CD4-positive, alpha-beta memory T cell (primary cell): ENCODE measurements at regions of chr12 and their contacts with region 1.

Region 1: GRCh38 chr12:52327052-52327829 is 6.0 kb upstream of the KRT83 start:
- DNase-seq: peak; percentile 76 to 84 (median 80)
- H3K4me3 ChIP-seq: no peak overlapping the region
- H3K4me3 Mint-ChIP-seq: peak overlapping the region in 1 of 8 donors; percentile 2
- H3K27ac ChIP-seq: no peak overlapping the region
- H3K27ac Mint-ChIP-seq: peak overlapping the region in 2 of 7 donors; percentile 36 to 75
- H3K4me1 ChIP-seq: peaks cover 3% of the 10 kb centered on the region
- H3K4me1 Mint-ChIP-seq: peaks cover 5 to 7% (median 6%) of the 10 kb centered on the region in 4 donors
- H3K27me3 ChIP-seq: no peaks in the 10 kb centered on the region
- H3K27me3 Mint-ChIP-seq: peaks cover 7 to 12% of the 10 kb centered on the region in 2 donors

Region 2: DNA sequence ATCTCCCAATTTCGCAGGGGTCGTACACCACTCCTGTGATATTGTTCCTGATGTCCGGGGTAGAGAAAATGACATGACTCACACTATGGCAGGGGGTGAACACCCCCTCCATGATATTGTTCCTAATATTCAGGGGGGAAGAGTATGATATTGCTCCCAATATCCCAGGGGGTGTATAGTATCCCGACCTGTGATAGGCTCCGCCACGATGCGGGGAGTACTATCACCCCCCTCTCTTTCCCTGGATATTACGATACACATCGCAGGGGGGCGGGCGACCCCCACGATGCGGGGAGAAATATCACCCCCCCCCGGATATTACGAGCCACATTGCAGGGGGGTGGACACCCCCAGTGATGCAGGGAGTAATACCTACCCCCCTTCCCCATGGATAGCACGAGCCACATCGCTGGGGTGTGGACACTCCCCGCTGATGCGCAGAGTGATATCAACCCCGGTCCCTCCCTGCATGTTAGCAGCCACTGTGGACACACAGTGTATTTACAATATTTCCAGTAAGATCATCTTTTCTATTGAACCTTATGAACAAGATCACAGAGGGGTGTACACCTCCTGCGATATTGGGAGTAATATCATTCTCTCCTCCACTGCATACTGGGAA is 230.1 kb before region 1 on chr12:
- CTCF ChIA-PET with region 1: no interaction called
- POLR2A ChIA-PET with region 1: no interaction called
- intact Hi-C with region 1: no loop called
- DNase-seq: no peak
- H3K4me3 ChIP-seq: no peak overlapping the region
- H3K4me3 Mint-ChIP-seq: no peak overlapping the region
- H3K27ac ChIP-seq: no peak overlapping the region
- H3K27ac Mint-ChIP-seq: peak overlapping the region in 1 of 7 donors; percentile 11
- H3K4me1 ChIP-seq: no peaks in the 10 kb centered on the region
- H3K4me1 Mint-ChIP-seq: no peaks in the 10 kb centered on the region
- H3K27me3 ChIP-seq: peaks cover 8% of the 10 kb centered on the region
- H3K27me3 Mint-ChIP-seq: peaks cover 42 to 53% of the 10 kb centered on the region in 2 donors

Region 3: GRCh38 chr12:52139552-52140062 is 187.6 kb before region 1 on chr12:
- CTCF ChIA-PET with region 1: interaction called, 17 read pairs
- POLR2A ChIA-PET with region 1: no interaction called
- intact Hi-C with region 1: loop called (anchors 5 kb)
- DNase-seq: peak in 4 of 5 donors; percentile 25 to 47 (median 34)
- H3K4me3 ChIP-seq: no peak overlapping the region
- H3K4me3 Mint-ChIP-seq: no peak overlapping the region
- H3K27ac ChIP-seq: no peak overlapping the region
- H3K27ac Mint-ChIP-seq: peak overlapping the region in 2 of 7 donors; percentile 14 to 75
- H3K4me1 ChIP-seq: no peaks in the 10 kb centered on the region
- H3K4me1 Mint-ChIP-seq: peaks cover 0 to 3% (median 0%) of the 10 kb centered on the region in 4 donors
- H3K27me3 ChIP-seq: no peaks in the 10 kb centered on the region
- H3K27me3 Mint-ChIP-seq: peaks cover 3 to 6% of the 10 kb centered on the region in 2 donors

Region 4: DNA sequence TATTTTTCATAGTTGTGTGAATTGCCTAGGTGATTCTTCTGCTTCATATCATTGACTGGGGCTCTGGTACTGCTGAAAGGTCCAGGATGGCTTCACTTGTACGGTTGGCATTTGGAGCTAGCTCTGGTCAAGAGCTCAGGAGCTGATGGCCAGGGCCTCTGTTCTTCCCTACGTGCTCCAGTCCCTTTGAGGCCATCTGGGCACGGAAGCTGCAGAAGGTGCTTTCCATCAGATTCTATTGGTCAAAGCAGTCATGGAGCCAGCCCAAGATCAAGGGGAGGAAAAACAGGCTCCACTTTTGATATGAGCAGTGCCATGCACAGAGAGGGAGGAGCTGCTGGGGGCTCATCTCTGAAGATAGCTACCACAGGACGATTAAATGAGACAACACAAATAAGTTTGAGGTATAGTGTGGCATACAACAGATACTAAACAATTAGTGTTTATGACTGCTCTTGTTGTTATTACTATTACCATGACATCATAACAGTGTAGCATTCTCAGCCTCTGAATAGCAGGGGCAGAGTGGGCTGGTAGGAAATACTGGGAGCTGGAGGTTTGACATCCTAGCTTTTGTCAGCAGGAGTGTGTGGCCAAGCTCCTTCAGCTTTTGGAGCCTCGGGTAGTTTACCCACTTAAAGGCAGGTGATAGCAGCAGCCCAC is 16.5 kb before region 1 on chr12:
- CTCF ChIA-PET with region 1: interaction called, 26 read pairs
- POLR2A ChIA-PET with region 1: no interaction called
- intact Hi-C with region 1: no loop called
- DNase-seq: no peak
- H3K4me3 ChIP-seq: no peak overlapping the region
- H3K4me3 Mint-ChIP-seq: peak overlapping the region in 1 of 8 donors; percentile 24
- H3K27ac ChIP-seq: no peak overlapping the region
- H3K27ac Mint-ChIP-seq: no peak overlapping the region
- H3K4me1 ChIP-seq: no peaks in the 10 kb centered on the region
- H3K4me1 Mint-ChIP-seq: peaks cover 4 to 11% (median 4%) of the 10 kb centered on the region in 4 donors
- H3K27me3 ChIP-seq: peaks cover 8% of the 10 kb centered on the region
- H3K27me3 Mint-ChIP-seq: peaks cover 32 to 57% of the 10 kb centered on the region in 2 donors

Region 5: GRCh38 chr12:52338241-52338960 is 11.2 kb after region 1 on chr12:
- CTCF ChIA-PET with region 1: interaction called, 19 read pairs
- POLR2A ChIA-PET with region 1: no interaction called
- intact Hi-C with region 1: no loop called
- DNase-seq: no peak
- H3K4me3 ChIP-seq: no peak overlapping the region
- H3K4me3 Mint-ChIP-seq: no peak overlapping the region
- H3K27ac ChIP-seq: no peak overlapping the region
- H3K27ac Mint-ChIP-seq: peak overlapping the region in 1 of 7 donors; percentile 23
- H3K4me1 ChIP-seq: no peaks in the 10 kb centered on the region
- H3K4me1 Mint-ChIP-seq: no peaks in the 10 kb centered on the region
- H3K27me3 ChIP-seq: no peaks in the 10 kb centered on the region
- H3K27me3 Mint-ChIP-seq: peaks cover 9 to 11% of the 10 kb centered on the region in 2 donors

Region 6: GRCh38 chr12:52419656-52420055 is 92.4 kb after region 1 on chr12:
- CTCF ChIA-PET with region 1: no interaction called
- POLR2A ChIA-PET with region 1: no interaction called
- intact Hi-C with region 1: no loop called
- DNase-seq: no peak
- H3K4me3 ChIP-seq: no peak overlapping the region
- H3K4me3 Mint-ChIP-seq: no peak overlapping the region
- H3K27ac ChIP-seq: no peak overlapping the region
- H3K27ac Mint-ChIP-seq: no peak overlapping the region
- H3K4me1 ChIP-seq: no peaks in the 10 kb centered on the region
- H3K4me1 Mint-ChIP-seq: peaks cover 0 to 1% (median 0%) of the 10 kb centered on the region in 4 donors
- H3K27me3 ChIP-seq: no peaks in the 10 kb centered on the region
- H3K27me3 Mint-ChIP-seq: peaks cover 11 to 25% of the 10 kb centered on the region in 2 donors

Region 7: GRCh38 chr12:52870351-52871290 is 543.4 kb after region 1 on chr12:
- CTCF ChIA-PET with region 1: interaction called, 5 read pairs
- POLR2A ChIA-PET with region 1: no interaction called
- intact Hi-C with region 1: loop called (anchors 5 kb)
- DNase-seq: peak; percentile 66 to 76 (median 72)
- H3K4me3 ChIP-seq: no peak overlapping the region
- H3K4me3 Mint-ChIP-seq: peak overlapping the region in 3 of 8 donors; percentile 16 to 49 (median 22)
- H3K27ac ChIP-seq: no peak overlapping the region
- H3K27ac Mint-ChIP-seq: peak overlapping the region in 4 of 7 donors; percentile 27 to 85 (median 62)
- H3K4me1 ChIP-seq: peaks cover 21% of the 10 kb centered on the region
- H3K4me1 Mint-ChIP-seq: peaks cover 15 to 29% (median 24%) of the 10 kb centered on the region in 4 donors
- H3K27me3 ChIP-seq: no peaks in the 10 kb centered on the region
- H3K27me3 Mint-ChIP-seq: no peaks in the 10 kb centered on the region